ENCODE measurements at regions of chr12 and their contacts with region 1.

Region 1: DNA sequence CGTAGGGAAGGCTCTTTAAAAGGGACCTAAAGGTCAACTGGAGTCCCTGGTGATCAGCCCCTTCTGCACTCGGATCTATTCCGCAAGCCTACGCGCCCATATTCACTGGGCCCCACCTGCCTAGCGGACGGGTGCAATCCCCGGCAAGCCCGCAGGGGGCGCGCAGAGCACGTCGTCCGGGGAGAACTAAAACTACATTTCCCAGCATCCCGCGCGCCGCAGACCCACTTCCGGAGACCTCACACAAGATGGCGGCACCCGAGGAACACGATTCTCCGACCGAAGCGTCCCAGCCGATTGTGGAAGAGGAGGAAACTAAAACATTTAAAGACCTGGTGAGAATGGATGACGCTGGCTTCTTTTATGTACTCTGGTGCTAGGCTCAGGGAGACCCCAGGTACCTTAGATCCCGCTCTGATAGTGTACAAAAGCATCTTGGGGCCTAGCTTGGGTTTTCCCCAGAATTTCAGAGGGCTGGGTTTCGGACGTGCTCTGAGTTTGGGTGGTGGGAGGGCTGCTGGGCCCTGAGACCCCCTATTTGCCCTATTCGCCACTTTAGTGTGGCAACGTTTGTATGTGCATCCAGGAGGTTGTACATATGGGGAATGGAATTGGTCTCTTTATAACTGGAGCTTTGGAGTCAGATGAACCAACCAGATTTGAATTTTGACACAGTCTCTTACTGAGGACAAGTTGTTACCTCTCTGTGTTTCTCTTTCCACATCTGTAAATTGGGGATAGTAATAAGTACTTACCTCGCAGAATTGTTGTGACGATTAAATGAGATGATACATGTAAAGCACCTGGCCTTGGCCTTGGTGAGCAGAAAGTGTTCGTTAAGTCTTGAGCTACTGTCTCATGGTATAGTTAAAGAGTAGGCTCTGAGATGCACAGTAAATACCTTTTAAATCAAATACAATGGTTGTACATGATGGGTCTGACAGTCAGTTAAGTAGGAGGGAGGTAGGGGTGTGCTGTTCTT is at the start of gene DDX47:
- DNase-seq: peak; percentile 99
- H3K4me3 Mint-ChIP-seq: peak within 1 kb of the TSS; percentile 93
- H3K27ac Mint-ChIP-seq: peak within 1 kb of the TSS; percentile 96
- H3K4me1 Mint-ChIP-seq: peaks cover 48% of the 10 kb centered on the region
- H3K27me3 Mint-ChIP-seq: no peaks in the 10 kb centered on the region
- total RNA-seq, gene DDX47: 123 and 133 TPM in 2 replicates

Region 2: GRCh38 chr12:12803186-12803585 is 10.2 kb before region 1 on chr12:
- intact Hi-C with region 1: loop called (anchors 1 kb)
- DNase-seq: peak; percentile 86
- H3K4me3 Mint-ChIP-seq: peak overlapping the region; percentile 56
- H3K27ac Mint-ChIP-seq: peak overlapping the region; percentile 60
- H3K4me1 Mint-ChIP-seq: peaks cover 49% of the 10 kb centered on the region
- H3K27me3 Mint-ChIP-seq: no peaks in the 10 kb centered on the region

Region 3: GRCh38 chr12:13173012-13173932 is 359.9 kb after region 1 on chr12:
- intact Hi-C with region 1: loop called (anchors 10 kb)
- DNase-seq: peak; percentile 69
- H3K4me3 Mint-ChIP-seq: no peak overlapping the region
- H3K27ac Mint-ChIP-seq: peak overlapping the region; percentile 52
- H3K4me1 Mint-ChIP-seq: peaks cover 13% of the 10 kb centered on the region
- H3K27me3 Mint-ChIP-seq: peaks cover 53% of the 10 kb centered on the region